Left ventricle myocardium inferior (tissue), 1 donor: ENCODE measurements at regions of chr3 and their contacts with region 1.

Region 1: DNA sequence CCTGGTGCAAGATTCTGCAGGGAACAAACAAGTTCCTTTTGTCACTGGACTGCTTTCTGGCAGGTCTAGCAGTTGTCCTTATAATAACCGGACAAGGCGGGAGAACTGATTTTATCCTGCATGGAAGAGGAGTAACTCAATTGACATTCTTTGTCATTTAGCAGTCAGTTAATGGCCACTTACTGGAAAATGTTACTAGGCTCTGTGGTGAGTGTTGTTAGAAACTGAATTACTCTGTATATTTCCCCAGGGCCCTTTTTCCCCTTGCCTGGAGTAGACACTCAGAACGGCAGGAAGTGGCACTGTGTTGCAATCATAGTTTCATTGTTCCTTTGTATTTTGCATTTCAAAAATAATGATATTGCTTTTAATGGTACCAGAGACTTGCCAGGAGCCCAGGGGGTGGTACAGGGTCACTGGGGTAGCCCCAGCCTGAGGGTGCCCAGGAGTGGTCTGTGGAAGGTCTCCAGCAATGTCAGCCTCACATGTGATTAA is 318.6 kb upstream of the LRRFIP2 start:
- DNase-seq: no peak
- H3K4me3 ChIP-seq: peak overlapping the region; percentile 3
- H3K27ac ChIP-seq: peak overlapping the region; percentile 82
- H3K4me1 ChIP-seq: peaks cover 77% of the 10 kb centered on the region
- H3K27me3 ChIP-seq: no peaks in the 10 kb centered on the region
- CTCF ChIP-seq: no peak

Region 2: GRCh38 chr3:37456270-37456708 is 36.7 kb before region 1 on chr3:
- intact Hi-C with region 1: loop called (anchors 5 kb)
- DNase-seq: peak; percentile 87
- H3K4me3 ChIP-seq: peak overlapping the region; percentile 89
- H3K27ac ChIP-seq: peak overlapping the region; percentile 96
- H3K4me1 ChIP-seq: peaks cover 89% of the 10 kb centered on the region
- H3K27me3 ChIP-seq: no peaks in the 10 kb centered on the region
- CTCF ChIP-seq: peak; percentile 25